ENCODE measurements at regions of chrX and their contacts with region 1.

Region 1: GRCh38 chrX:28586981-28587551 is at the start of gene IL1RAPL1:
- DNase-seq: peak; percentile 78
- H3K4me3 ChIP-seq: peak within 1 kb of the TSS; percentile 50 to 88 (median 59)
- H3K27ac ChIP-seq: peak within 1 kb of the TSS; percentile 26
- H3K4me1 ChIP-seq: peaks cover 32% of the 10 kb centered on the region
- H3K27me3 ChIP-seq: no peaks in the 10 kb centered on the region
- CTCF ChIP-seq: no peak
- POLR2A ChIP-seq: no peak
- total RNA-seq, gene IL1RAPL1: 1.3 and 1.6 TPM in 2 replicates

Region 2: DNA sequence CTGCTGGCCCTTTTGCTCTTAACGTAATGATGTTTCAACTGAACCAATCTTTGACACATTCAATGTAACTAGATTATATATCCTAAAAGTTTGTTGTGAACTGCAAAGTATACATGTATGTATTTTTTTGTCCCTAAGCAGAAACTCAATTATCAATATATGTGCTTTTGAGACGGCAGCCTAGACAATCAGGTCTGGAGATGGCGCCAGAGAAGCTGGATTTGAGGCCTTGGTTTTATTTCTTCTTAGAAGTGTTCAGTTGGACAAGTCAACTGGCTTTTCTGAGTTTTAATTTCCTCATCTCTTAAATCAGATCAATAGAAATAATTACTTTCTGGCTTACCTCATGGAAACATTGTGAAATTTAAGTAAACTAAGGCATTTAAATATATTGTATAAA is 668.3 kb before region 1 on chrX:
- CTCF ChIA-PET with region 1: no interaction called
- POLR2A ChIA-PET with region 1: no interaction called
- dilution Hi-C with region 1: no loop called
- intact Hi-C with region 1: loop called (anchors 1 kb)
- DNase-seq: peak; percentile 13
- H3K4me3 ChIP-seq: no peak overlapping the region
- H3K27ac ChIP-seq: no peak overlapping the region
- H3K4me1 ChIP-seq: no peaks in the 10 kb centered on the region
- H3K27me3 ChIP-seq: no peaks in the 10 kb centered on the region
- CTCF ChIP-seq: no peak
- POLR2A ChIP-seq: no peak

Region 3: GRCh38 chrX:28408017-28408723 is 178.9 kb before region 1 on chrX:
- CTCF ChIA-PET with region 1: no interaction called
- POLR2A ChIA-PET with region 1: no interaction called
- dilution Hi-C with region 1: no loop called
- intact Hi-C with region 1: loop called (anchors 1 kb)
- DNase-seq: no peak
- H3K4me3 ChIP-seq: no peak overlapping the region
- H3K27ac ChIP-seq: no peak overlapping the region
- H3K4me1 ChIP-seq: peaks cover 13% of the 10 kb centered on the region
- H3K27me3 ChIP-seq: no peaks in the 10 kb centered on the region
- CTCF ChIP-seq: no peak
- POLR2A ChIP-seq: no peak

Region 4: GRCh38 chrX:28542791-28543190 is 44.3 kb before region 1 on chrX:
- CTCF ChIA-PET with region 1: no interaction called
- POLR2A ChIA-PET with region 1: no interaction called
- dilution Hi-C with region 1: no loop called
- intact Hi-C with region 1: no loop called
- DNase-seq: no peak
- H3K4me3 ChIP-seq: no peak overlapping the region
- H3K27ac ChIP-seq: no peak overlapping the region
- H3K4me1 ChIP-seq: no peaks in the 10 kb centered on the region
- H3K27me3 ChIP-seq: no peaks in the 10 kb centered on the region
- CTCF ChIP-seq: no peak
- POLR2A ChIP-seq: no peak

Region 5: GRCh38 chrX:28802625-28803024 is 215.6 kb after region 1 on chrX:
- CTCF ChIA-PET with region 1: no interaction called
- POLR2A ChIA-PET with region 1: no interaction called
- dilution Hi-C with region 1: no loop called
- intact Hi-C with region 1: loop called (anchors 5 kb)
- DNase-seq: peak; percentile 1
- H3K4me3 ChIP-seq: no peak overlapping the region
- H3K27ac ChIP-seq: no peak overlapping the region
- H3K4me1 ChIP-seq: no peaks in the 10 kb centered on the region
- H3K27me3 ChIP-seq: no peaks in the 10 kb centered on the region
- CTCF ChIP-seq: no peak
- POLR2A ChIP-seq: no peak

Region 6: DNA sequence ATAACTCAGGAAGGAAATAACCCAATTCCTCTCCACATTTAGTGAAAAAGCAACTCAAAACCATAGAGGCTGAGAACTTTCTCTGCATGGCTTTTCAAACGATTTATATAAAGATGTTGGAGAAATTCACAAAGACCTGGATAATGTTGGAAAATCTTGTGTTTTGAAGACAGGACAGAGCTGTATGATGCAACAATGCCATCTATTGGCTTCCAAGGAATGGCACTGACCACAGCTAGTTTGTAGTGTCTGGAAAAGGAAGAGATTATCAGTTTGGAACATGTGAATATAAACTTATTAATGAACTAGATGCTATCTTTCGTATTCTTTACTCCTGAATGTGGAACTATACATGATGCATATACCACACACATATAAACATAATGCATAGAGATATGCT is 503.7 kb after region 1 on chrX:
- CTCF ChIA-PET with region 1: interaction called, 7 read pairs
- POLR2A ChIA-PET with region 1: no interaction called
- dilution Hi-C with region 1: no loop called
- intact Hi-C with region 1: loop called (anchors 1 kb)
- DNase-seq: peak; percentile 26
- H3K4me3 ChIP-seq: no peak overlapping the region
- H3K27ac ChIP-seq: no peak overlapping the region
- H3K4me1 ChIP-seq: no peaks in the 10 kb centered on the region
- H3K27me3 ChIP-seq: no peaks in the 10 kb centered on the region
- CTCF ChIP-seq: peak in 1 of 2 donors; percentile 23
- POLR2A ChIP-seq: no peak

Region 7: GRCh38 chrX:29478336-29479069 is 891.4 kb after region 1 on chrX:
- CTCF ChIA-PET with region 1: no interaction called
- POLR2A ChIA-PET with region 1: no interaction called
- dilution Hi-C with region 1: no loop called
- intact Hi-C with region 1: loop called (anchors 5 kb)
- DNase-seq: peak; percentile 24
- H3K4me3 ChIP-seq: no peak overlapping the region
- H3K27ac ChIP-seq: no peak overlapping the region
- H3K4me1 ChIP-seq: no peaks in the 10 kb centered on the region
- H3K27me3 ChIP-seq: no peaks in the 10 kb centered on the region
- CTCF ChIP-seq: peak; percentile 35 to 56
- POLR2A ChIP-seq: no peak

Region 8: GRCh38 chrX:29903360-29903759 is 1316.3 kb after region 1 on chrX:
- CTCF ChIA-PET with region 1: no interaction called
- POLR2A ChIA-PET with region 1: no interaction called
- dilution Hi-C with region 1: no loop called
- intact Hi-C with region 1: loop called (anchors 10 kb)
- DNase-seq: peak; percentile 9
- H3K4me3 ChIP-seq: no peak overlapping the region
- H3K27ac ChIP-seq: no peak overlapping the region
- H3K4me1 ChIP-seq: no peaks in the 10 kb centered on the region
- H3K27me3 ChIP-seq: no peaks in the 10 kb centered on the region
- CTCF ChIP-seq: peak in 1 of 2 donors; percentile 30
- POLR2A ChIP-seq: no peak

Measured in endothelial cell of umbilical vein (primary cell).